ENCODE measurements at regions of chr19 and their contacts with region 1.

Region 1: GRCh38 chr19:46384396-46384795 is 29.0 kb downstream of the CCDC8 start:
- DNase-seq: no peak
- ATAC-seq: no peak
- H3K4me3 ChIP-seq: no peak overlapping the region
- H3K27ac ChIP-seq: no peak overlapping the region
- H3K4me1 ChIP-seq: peaks cover 0 to 3% of the 10 kb centered on the region in 2 experiments; a peak in 2 of 5 replicates
- H3K27me3 ChIP-seq: no peaks in the 10 kb centered on the region
- CTCF ChIP-seq: no peak
- EP300 ChIP-seq: no peak
- POLR2A ChIP-seq: no peak
- RAD21 ChIP-seq: no peak

Region 2: GRCh38 chr19:46287585-46287984 is 96.8 kb before region 1 on chr19:
- CTCF ChIA-PET with region 1: no interaction called
- POLR2A ChIA-PET with region 1: no interaction called
- in situ Hi-C with region 1: loop called (anchors 5 kb)
- intact Hi-C with region 1: no loop called
- DNase-seq: peak in 3 of 4 experiments; percentile 27 to 48 (median 41)
- ATAC-seq: peak; percentile 67
- H3K4me3 ChIP-seq: no peak overlapping the region
- H3K27ac ChIP-seq: no peak overlapping the region
- H3K4me1 ChIP-seq: no peaks in the 10 kb centered on the region
- H3K27me3 ChIP-seq: peaks cover 5 to 21% of the 10 kb centered on the region in 2 experiments; a peak in 4 of 5 replicates
- CTCF ChIP-seq: no peak
- EP300 ChIP-seq: no peak
- POLR2A ChIP-seq: no peak
- RAD21 ChIP-seq: no peak

Region 3: GRCh38 chr19:46487802-46488445 is 103.5 kb after region 1 on chr19:
- CTCF ChIA-PET with region 1: no interaction called
- POLR2A ChIA-PET with region 1: no interaction called
- in situ Hi-C with region 1: no loop called
- intact Hi-C with region 1: no loop called
- DNase-seq: peak; percentile 74 to 80 (median 77)
- ATAC-seq: peak; percentile 89
- H3K4me3 ChIP-seq: no peak overlapping the region
- H3K27ac ChIP-seq: no peak overlapping the region
- H3K4me1 ChIP-seq: peaks cover 0 to 22% of the 10 kb centered on the region in 2 experiments; a peak in 4 of 5 replicates
- H3K27me3 ChIP-seq: peaks cover 51 to 80% of the 10 kb centered on the region in 2 experiments
- CTCF ChIP-seq: peak; percentile 94 to 97 (median 95)
- EP300 ChIP-seq: no peak
- POLR2A ChIP-seq: no peak
- RAD21 ChIP-seq: peak; percentile 96 to 99

Measured in K562 (cell line).